ENCODE measurements at regions of chr3 and their contacts with region 1.

Region 1: DNA sequence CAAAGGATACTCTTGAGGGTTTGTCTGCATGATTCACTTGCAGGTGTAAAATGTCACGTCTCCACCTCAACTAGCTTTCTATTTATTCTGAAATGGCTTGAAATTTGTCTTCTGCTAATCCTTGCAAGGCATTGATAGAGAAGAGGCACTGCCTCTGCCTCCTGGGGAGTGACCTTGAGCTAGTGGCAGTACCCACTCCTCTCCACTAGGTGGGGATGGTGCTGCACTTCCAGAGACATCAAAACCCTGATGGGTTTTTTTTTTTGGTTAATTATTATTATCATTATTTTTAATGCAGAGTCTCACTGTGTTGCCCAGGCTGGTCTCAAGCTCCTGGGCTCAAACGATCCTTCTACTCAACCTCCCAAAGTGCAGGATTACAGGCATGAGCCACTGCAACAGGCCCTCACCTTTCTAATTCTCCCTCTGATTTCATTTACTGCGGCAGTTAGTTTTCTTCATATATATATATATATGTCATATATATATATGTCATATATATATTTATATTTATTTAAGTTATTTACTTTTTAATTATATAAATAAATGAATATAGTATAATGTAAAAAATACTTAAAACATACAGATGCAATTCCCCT is 117.6 kb upstream of the EIF1B start:
- DNase-seq: peak; percentile 54 to 87 (median 71)
- H3K4me3 ChIP-seq: no peak overlapping the region
- H3K27ac ChIP-seq: no peak overlapping the region
- H3K4me1 ChIP-seq: no peaks in the 10 kb centered on the region
- H3K27me3 ChIP-seq: no peaks in the 10 kb centered on the region
- CTCF ChIP-seq: peak; percentile 82 to 95 (median 91)
- POLR2A ChIP-seq: no peak

Region 2: GRCh38 chr3:39718674-39719595 is 473.0 kb before region 1 on chr3:
- intact Hi-C with region 1: loop called in 1 of 2 experiments (anchors 10 kb)
- DNase-seq: no peak
- H3K4me3 ChIP-seq: no peak overlapping the region
- H3K27ac ChIP-seq: no peak overlapping the region
- H3K4me1 ChIP-seq: no peaks in the 10 kb centered on the region
- H3K27me3 ChIP-seq: no peaks in the 10 kb centered on the region
- CTCF ChIP-seq: no peak
- POLR2A ChIP-seq: no peak

Region 3: DNA sequence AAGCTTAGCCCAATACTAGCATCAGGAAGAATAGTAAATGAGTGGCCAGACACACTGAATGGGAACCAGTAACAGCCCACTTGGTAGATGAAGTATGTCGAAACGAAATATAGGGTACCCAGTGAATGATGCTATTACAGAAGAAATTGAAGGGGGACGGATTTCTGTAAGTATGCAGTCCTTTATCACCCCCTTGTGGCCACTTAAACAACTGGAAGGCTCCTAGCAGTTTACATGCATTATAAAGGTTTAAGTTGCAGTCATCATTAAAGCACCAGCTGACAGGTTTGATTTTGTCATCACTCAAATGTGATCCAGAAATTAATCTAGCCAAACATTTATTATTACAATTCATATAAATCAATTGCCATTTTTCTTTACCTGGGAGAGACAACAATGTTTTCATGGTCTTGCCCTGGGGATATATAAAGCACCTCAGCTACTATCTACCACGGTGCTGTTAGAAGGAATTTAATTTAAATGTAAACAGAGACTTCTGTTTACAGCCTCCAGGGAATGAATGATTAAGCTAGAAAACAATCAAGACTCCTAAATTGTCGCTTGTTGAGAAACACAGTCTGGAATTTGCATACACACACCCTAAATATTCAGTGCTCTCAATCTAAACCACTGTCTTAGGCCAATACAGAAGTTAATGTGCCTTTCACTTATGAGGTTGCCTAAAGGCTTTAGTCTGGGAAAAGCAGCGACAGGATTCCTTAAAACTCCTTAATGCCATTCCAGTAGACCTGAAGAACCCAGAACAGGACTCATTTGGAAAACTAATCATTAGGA is 125.3 kb after region 1 on chr3:
- intact Hi-C with region 1: loop called (anchors 5 kb)
- DNase-seq: peak in 5 of 7 donors; percentile 28 to 68 (median 50)
- H3K4me3 ChIP-seq: no peak overlapping the region
- H3K27ac ChIP-seq: no peak overlapping the region
- H3K4me1 ChIP-seq: peaks cover 0 to 21% of the 10 kb centered on the region in 2 donors
- H3K27me3 ChIP-seq: no peaks in the 10 kb centered on the region
- CTCF ChIP-seq: peak; percentile 77 to 91 (median 85)
- POLR2A ChIP-seq: no peak

Region 4: DNA sequence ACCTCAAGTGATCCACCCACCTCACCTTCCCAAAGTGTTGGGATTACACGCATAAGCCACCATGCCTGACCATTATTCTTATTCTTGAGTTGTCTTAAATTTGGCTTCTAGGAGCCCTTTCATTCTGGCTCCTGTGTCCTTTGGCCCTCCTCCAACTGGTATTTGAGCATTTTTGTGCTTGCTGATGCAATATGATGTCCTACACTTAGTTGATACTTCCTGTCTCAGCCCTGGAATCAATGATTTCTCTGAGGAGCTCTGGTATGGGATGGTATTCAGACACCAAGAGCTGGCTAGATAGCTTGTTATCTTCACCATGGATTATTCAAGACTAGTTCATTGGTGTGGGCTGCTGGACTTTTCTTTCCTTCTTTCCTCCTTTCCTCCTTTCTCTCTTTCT is 358.2 kb after region 1 on chr3:
- intact Hi-C with region 1: no loop called
- DNase-seq: no peak
- H3K4me3 ChIP-seq: no peak overlapping the region
- H3K27ac ChIP-seq: no peak overlapping the region
- H3K4me1 ChIP-seq: no peaks in the 10 kb centered on the region
- H3K27me3 ChIP-seq: no peaks in the 10 kb centered on the region
- CTCF ChIP-seq: no peak
- POLR2A ChIP-seq: no peak

Measured in adrenal gland (tissue), 19 donors.